Gastrocnemius medialis (tissue), 4 donors: ENCODE measurements at regions of chr9 and their contacts with region 1.

Region 1: GRCh38 chr9:2125906-2126305 is 110.8 kb downstream of the SMARCA2 start:
- DNase-seq: no peak
- ATAC-seq: peak in 1 of 2 donors; percentile 60
- H3K4me3 ChIP-seq: peak overlapping the region in 2 of 4 donors; percentile 10 to 20
- H3K27ac ChIP-seq: peak overlapping the region; percentile 24 to 66 (median 59)
- H3K4me1 ChIP-seq: peaks cover 54 to 56% of the 10 kb centered on the region in 2 donors
- H3K27me3 ChIP-seq: no peaks in the 10 kb centered on the region
- CTCF ChIP-seq: no peak
- POLR2A ChIP-seq: no peak

Region 2: GRCh38 chr9:517993-518392 is 1607.9 kb before region 1 on chr9:
- in situ Hi-C with region 1: no loop called
- intact Hi-C with region 1: loop called (anchors 5 kb)
- DNase-seq: no peak
- ATAC-seq: no peak
- H3K4me3 ChIP-seq: no peak overlapping the region
- H3K27ac ChIP-seq: no peak overlapping the region
- H3K4me1 ChIP-seq: peaks cover 0 to 2% of the 10 kb centered on the region in 2 donors
- H3K27me3 ChIP-seq: no peaks in the 10 kb centered on the region
- CTCF ChIP-seq: no peak
- POLR2A ChIP-seq: no peak

Region 3: DNA sequence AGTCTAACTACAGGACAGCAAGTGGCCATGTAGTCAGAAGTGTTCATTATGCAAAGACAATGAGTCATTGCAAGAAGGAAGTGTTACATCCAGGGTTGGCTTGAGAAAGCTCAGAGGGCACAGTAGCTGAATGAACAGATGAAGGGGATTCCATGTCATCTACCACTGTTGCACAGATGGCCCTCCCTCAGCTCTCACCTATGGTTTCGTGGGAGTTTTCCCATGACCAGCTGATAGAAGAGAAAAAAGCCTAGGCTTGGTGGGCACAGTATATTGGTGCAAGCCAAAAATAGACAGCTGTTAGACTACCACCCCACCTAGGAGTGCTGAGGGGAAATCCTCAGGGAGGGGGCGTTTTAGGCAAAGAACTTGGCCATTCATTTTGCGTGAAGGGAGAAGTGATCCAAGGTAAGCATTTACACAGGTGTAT is 858.8 kb before region 1 on chr9:
- in situ Hi-C with region 1: no loop called
- intact Hi-C with region 1: no loop called
- DNase-seq: no peak
- ATAC-seq: no peak
- H3K4me3 ChIP-seq: no peak overlapping the region
- H3K27ac ChIP-seq: no peak overlapping the region
- H3K4me1 ChIP-seq: no peaks in the 10 kb centered on the region
- H3K27me3 ChIP-seq: no peaks in the 10 kb centered on the region
- CTCF ChIP-seq: no peak
- POLR2A ChIP-seq: no peak

Region 4: GRCh38 chr9:2170712-2171111 is 44.8 kb after region 1 on chr9:
- in situ Hi-C with region 1: no loop called
- intact Hi-C with region 1: no loop called
- DNase-seq: no peak
- ATAC-seq: no peak
- H3K4me3 ChIP-seq: no peak overlapping the region
- H3K27ac ChIP-seq: no peak overlapping the region
- H3K4me1 ChIP-seq: peaks cover 10 to 12% of the 10 kb centered on the region in 2 donors
- H3K27me3 ChIP-seq: no peaks in the 10 kb centered on the region
- CTCF ChIP-seq: no peak
- POLR2A ChIP-seq: no peak

Region 5: GRCh38 chr9:2181792-2182191 is 55.9 kb after region 1 on chr9:
- in situ Hi-C with region 1: loop called in 1 of 4 experiments (anchors 5 kb)
- intact Hi-C with region 1: no loop called
- DNase-seq: peak in 1 of 2 donors; percentile 26
- ATAC-seq: peak in 1 of 2 donors; percentile 49
- H3K4me3 ChIP-seq: no peak overlapping the region
- H3K27ac ChIP-seq: no peak overlapping the region
- H3K4me1 ChIP-seq: peaks cover 9 to 13% of the 10 kb centered on the region in 2 donors
- H3K27me3 ChIP-seq: no peaks in the 10 kb centered on the region
- CTCF ChIP-seq: peak in 4 of 5 experiments; percentile 33 to 59 (median 48)
- POLR2A ChIP-seq: no peak

Region 6: GRCh38 chr9:2494562-2494961 is 368.7 kb after region 1 on chr9:
- in situ Hi-C with region 1: no loop called
- intact Hi-C with region 1: loop called (anchors 10 kb)
- DNase-seq: no peak
- ATAC-seq: no peak
- H3K4me3 ChIP-seq: no peak overlapping the region
- H3K27ac ChIP-seq: peak overlapping the region in 1 of 4 donors; percentile 10
- H3K4me1 ChIP-seq: peaks cover 16 to 29% of the 10 kb centered on the region in 2 donors
- H3K27me3 ChIP-seq: no peaks in the 10 kb centered on the region
- CTCF ChIP-seq: no peak
- POLR2A ChIP-seq: no peak